ENCODE measurements at regions of chr10 and their contacts with region 1.

Region 1: GRCh38 chr10:114304017-114304570 is 65.0 kb downstream of the VWA2 start:
- DNase-seq: peak; percentile 84
- ATAC-seq: peak; percentile 91

Region 2: GRCh38 chr10:113958631-113959382 is 345.3 kb before region 1 on chr10:
- intact Hi-C with region 1: no loop called
- DNase-seq: no peak
- ATAC-seq: peak; percentile 69

Region 3: DNA sequence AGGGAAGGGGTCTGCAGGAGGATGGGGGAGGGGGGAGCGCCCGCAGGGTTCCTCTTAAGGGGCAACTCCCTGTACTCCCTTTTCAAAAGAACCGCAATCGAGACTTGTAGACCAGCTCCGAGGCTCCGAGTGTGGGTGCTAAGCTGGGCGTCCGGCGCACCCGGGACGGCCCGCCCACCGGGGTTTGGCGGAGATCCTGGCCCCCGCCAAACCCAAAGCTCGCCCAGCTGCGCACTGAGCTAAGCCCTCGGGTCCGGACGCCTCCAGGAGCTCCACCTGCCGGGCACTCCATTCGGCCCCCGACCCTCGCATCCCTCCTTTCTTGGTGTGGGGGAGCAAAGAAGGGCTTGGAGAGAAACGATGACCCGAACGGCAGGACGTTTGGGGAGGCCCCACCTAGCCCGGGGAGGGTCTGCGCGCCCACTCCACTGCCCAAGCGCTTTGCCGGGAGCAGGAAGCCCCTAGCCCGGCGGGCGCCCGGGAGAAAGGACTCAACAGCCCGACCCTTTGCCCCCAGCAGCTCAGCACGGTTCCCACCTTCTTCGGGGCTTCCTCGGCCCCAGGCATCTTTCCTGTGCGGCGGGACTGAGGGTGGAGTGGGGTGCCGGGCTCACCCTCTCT is 99.6 kb after region 1 on chr10:
- intact Hi-C with region 1: no loop called
- DNase-seq: peak; percentile 58
- ATAC-seq: peak; percentile 71

Region 4: GRCh38 chr10:114427124-114427852 is 123.2 kb after region 1 on chr10:
- intact Hi-C with region 1: loop called (anchors 2 kb)
- DNase-seq: no peak
- ATAC-seq: peak; percentile 26

Region 5: GRCh38 chr10:114584419-114584818 is 280.3 kb after region 1 on chr10:
- intact Hi-C with region 1: no loop called
- DNase-seq: no peak
- ATAC-seq: no peak

Region 6: GRCh38 chr10:114801411-114801813 is 497.3 kb after region 1 on chr10:
- intact Hi-C with region 1: loop called (anchors 10 kb)
- DNase-seq: no peak
- ATAC-seq: peak; percentile 91

Measured in Right ventricle myocardium superior (tissue), 1 donor.